ENCODE measurements at regions of chr1 and their contacts with region 1.

Region 1: DNA sequence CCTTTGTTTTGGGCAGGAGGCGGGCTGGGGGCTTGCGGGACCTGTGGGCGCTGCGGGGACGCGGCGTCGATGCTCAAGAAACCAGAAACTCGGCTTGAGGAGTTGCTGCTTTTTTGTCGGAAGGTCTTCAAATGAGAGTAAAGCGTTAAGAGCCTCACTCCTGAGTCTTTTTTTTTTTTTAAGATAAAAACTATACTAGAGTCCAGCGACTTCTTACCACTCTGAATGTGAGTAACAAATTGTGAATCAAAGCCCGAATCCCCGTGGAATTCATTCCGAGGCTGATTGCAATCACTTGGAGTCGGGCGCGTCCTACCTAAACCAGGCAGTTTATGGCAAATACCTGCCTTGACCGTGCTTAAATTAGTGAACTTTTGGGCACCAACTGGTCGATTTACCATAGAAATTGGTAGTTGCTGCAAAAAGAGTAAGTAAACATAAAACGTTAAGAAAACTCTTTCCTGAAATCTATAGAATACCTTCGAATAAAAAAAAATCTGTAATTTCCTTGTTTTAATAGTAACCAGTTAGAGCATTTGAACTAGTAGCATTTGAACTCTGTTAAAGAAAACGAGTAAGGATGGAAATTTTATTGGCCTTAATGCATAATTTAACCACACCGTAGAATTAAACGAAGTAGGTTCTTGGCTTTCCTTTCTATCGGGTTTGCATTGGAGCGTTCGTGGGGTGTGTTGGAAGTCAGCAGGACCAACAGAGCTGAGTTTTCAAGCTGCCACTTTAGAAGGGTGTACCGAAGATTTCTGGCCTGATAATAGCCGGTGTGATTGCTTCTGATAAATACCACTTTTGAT is 769 bp downstream of the GPSM2 start:
- DNase-seq: no peak
- H3K4me3 Mint-ChIP-seq: peak overlapping the region; percentile 89
- H3K27ac Mint-ChIP-seq: no peak overlapping the region
- H3K4me1 Mint-ChIP-seq: peaks cover 4% of the 10 kb centered on the region
- H3K27me3 Mint-ChIP-seq: peaks cover 25% of the 10 kb centered on the region

Region 2: DNA sequence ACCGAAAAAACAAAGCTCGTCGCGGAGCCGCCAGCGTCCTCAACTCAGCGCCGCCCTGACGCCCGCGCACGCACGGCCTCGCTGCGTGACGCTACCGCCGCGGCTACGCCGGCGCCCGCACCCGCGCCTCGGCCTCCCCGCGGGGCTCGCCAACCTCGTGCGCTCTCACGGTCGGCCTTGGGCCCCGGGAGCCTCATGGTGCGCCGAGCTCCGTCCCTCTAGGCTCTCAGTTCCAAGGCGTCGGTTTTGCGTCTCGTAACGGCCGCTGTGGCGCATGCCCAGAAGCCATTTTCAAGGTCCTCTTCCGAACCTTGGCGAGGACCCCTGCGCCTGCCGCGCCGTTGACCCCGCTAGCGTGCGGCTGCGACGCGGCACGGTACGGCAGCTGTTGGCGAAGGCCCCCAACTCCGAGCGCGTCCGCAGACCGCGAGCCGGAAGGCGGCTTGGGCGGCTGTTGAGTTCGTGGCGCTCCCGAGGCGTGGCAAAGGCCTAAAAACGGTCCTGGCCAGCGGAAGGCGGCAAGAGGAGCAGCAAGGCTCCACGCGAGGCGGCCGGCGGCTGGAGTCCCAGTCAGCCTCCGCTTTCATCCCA is 216.4 kb before region 1 on chr1 and contains the start of gene HENMT1:
- CTCF ChIA-PET with region 1: no interaction called
- intact Hi-C with region 1: loop called (anchors 5 kb)
- DNase-seq: peak; percentile 78
- H3K4me3 Mint-ChIP-seq: peak within 1 kb of the TSS; percentile 84
- H3K27ac Mint-ChIP-seq: peak within 1 kb of the TSS; percentile 94
- H3K4me1 Mint-ChIP-seq: peaks cover 25% of the 10 kb centered on the region
- H3K27me3 Mint-ChIP-seq: no peaks in the 10 kb centered on the region
- total RNA-seq, gene HENMT1: 18.7 to 19.3 TPM